Heart left ventricle (tissue), 16 donors: ENCODE measurements at regions of chr9 and their contacts with region 1.

Region 1: DNA sequence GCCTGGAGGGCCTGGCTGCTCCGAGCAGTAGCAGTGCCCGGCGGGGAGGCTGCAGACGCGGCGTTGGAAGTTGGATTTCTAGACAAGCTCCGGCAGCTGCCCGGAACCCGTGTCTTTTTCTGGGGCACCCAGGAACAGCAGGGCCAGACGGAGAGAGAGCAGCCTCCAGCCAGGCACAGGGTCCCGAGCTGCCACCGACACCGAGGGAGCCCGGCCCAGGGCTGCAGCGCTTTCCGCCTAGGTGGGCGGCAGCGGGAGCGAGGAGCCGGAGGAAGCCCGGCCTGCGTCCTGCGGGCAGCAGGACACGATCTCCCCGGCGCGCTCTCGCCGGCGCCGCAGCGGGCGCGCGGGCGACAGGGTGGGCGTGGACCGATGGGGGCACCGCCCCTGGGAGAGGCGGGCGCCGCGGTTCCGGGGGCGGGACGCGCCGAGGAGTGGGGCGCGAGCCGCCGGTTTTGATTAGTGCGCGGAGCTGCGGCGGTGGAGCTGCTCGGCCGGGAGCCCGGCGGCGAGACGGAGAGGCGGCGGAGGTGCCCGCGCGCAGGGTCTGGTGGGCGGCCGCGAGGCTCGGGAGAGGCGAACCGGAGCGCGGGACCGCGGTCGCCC is at the start of gene UGCG:
- DNase-seq: peak; percentile 91 to 95 (median 93)
- ATAC-seq: peak; percentile 93 to 99 (median 98)
- H3K4me3 ChIP-seq: peak within 1 kb of the TSS; percentile 82 to 99 (median 92)
- H3K27ac ChIP-seq: peak within 1 kb of the TSS; percentile 80 to 97 (median 94)
- H3K4me1 ChIP-seq: peaks cover 10 to 51% (median 30%) of the 10 kb centered on the region in 12 donors
- H3K27me3 ChIP-seq: no peaks in the 10 kb centered on the region
- CTCF ChIP-seq: no peak
- POLR2A ChIP-seq: peak; percentile 78 to 97
- total RNA-seq, gene UGCG: 10.5 to 52.0 (median 17.5) TPM

Region 2: DNA sequence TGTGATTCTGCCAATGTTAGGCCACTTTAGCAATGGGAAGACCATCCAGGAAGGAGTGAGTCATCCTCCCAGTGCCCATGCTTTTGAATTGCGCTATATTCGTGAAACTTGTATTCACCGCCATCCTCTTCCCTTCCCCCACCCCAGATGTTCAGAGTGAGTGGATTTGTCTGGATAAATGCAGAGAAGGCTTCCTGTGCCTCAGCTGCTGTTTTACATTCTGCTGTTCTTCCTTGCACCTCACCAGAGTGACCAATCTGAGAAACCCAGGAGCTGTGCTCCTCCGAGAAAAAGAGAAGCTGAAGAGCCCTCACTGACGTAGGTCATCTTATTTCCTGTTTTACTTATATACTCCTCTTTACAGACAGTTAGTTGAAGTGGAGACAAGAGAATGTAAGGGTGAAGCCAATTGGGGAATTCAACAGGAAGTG is 1292.3 kb before region 1 on chr9:
- intact Hi-C with region 1: no loop called
- DNase-seq: no peak
- ATAC-seq: peak in 3 of 4 donors; percentile 14 to 38 (median 18)
- H3K4me3 ChIP-seq: no peak overlapping the region
- H3K27ac ChIP-seq: peak overlapping the region in 1 of 12 donors; percentile 64
- H3K4me1 ChIP-seq: no peaks in the 10 kb centered on the region
- H3K27me3 ChIP-seq: peaks cover 0 to 3% (median 0%) of the 10 kb centered on the region in 9 donors
- CTCF ChIP-seq: no peak
- POLR2A ChIP-seq: no peak

Region 3: GRCh38 chr9:111759762-111760639 is 136.5 kb before region 1 on chr9:
- intact Hi-C with region 1: loop called in 4 of 10 experiments (anchors 2 to 10 kb)
- DNase-seq: peak in 2 of 5 donors; percentile 48 to 50
- ATAC-seq: peak in 3 of 4 donors; percentile 88 to 91 (median 90)
- H3K4me3 ChIP-seq: no peak overlapping the region
- H3K27ac ChIP-seq: peak overlapping the region in 1 of 12 donors; percentile 39
- H3K4me1 ChIP-seq: peaks cover 0 to 8% (median 0%) of the 10 kb centered on the region in 12 donors
- H3K27me3 ChIP-seq: no peaks in the 10 kb centered on the region
- CTCF ChIP-seq: peak; percentile 53 to 81 (median 72)
- POLR2A ChIP-seq: no peak

Region 4: DNA sequence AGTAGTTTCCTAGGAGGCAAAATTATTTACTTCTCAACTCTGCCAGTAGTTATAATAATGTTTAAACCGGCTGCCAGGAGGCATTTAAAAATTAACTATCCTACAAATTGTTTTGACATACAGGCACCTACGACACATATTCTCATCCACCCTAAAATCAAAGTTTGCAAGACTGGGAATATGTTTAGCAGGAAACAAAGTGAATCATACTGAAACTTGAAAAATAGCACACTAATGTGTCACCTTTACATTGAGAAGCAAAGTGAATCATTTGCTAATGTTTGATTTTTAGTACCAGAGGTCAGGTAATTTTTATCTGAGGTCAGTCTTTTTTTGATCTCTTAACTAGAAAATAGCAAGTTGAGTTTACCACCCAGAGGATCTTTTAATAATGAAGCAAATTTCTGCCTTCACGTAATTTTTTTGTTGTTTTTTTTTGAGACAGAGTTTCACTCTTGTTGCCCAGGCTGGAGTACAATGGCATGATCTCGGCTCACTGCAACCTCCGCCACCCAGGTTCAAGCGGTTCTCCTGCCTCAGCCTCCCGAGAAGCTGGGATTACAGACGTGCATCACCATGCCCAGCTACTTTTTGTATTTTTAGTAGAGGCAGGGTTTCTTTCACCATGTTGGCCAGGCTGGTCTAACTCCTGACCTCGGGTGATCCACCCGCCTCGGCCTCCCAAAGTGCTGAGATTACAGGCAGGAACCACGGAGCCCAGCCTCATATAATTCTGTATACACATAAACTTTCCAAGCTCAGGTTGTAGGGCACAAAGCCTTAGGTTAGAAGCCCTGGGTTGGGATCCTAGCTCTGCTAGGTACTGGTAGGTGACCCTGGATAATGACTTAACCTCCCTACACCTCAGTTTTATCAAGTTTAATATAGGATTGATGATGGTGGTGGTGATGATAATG is 124.5 kb after region 1 on chr9:
- intact Hi-C with region 1: loop called in 1 of 10 experiments (anchors 10 kb)
- DNase-seq: no peak
- ATAC-seq: no peak
- H3K4me3 ChIP-seq: no peak overlapping the region
- H3K27ac ChIP-seq: no peak overlapping the region
- H3K4me1 ChIP-seq: peaks cover 0 to 14% (median 2%) of the 10 kb centered on the region in 12 donors
- H3K27me3 ChIP-seq: no peaks in the 10 kb centered on the region
- CTCF ChIP-seq: no peak
- POLR2A ChIP-seq: no peak

Region 5: DNA sequence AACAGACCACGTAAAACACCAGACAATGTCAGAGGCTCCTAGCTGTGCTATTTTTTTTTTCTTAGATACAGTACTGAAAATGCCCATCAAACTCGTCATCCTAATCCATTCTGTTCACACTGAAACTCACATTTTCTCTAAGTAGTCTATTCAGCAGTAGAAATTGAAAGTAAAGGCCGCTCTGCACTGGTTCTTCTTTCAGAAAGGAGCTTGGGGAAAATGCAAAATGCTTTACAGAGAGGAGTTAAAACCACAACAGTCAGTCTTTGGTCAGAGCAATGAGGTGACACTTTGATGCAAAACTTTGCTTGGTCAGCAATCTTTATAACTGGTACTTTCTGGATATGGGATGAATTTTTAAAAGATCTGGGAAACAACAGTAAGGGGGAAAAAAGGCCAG is 322.5 kb after region 1 on chr9:
- intact Hi-C with region 1: no loop called
- DNase-seq: no peak
- ATAC-seq: no peak
- H3K4me3 ChIP-seq: no peak overlapping the region
- H3K27ac ChIP-seq: no peak overlapping the region
- H3K4me1 ChIP-seq: peaks cover 0 to 7% (median 0%) of the 10 kb centered on the region in 12 donors
- H3K27me3 ChIP-seq: no peaks in the 10 kb centered on the region
- CTCF ChIP-seq: no peak
- POLR2A ChIP-seq: no peak

Region 6: DNA sequence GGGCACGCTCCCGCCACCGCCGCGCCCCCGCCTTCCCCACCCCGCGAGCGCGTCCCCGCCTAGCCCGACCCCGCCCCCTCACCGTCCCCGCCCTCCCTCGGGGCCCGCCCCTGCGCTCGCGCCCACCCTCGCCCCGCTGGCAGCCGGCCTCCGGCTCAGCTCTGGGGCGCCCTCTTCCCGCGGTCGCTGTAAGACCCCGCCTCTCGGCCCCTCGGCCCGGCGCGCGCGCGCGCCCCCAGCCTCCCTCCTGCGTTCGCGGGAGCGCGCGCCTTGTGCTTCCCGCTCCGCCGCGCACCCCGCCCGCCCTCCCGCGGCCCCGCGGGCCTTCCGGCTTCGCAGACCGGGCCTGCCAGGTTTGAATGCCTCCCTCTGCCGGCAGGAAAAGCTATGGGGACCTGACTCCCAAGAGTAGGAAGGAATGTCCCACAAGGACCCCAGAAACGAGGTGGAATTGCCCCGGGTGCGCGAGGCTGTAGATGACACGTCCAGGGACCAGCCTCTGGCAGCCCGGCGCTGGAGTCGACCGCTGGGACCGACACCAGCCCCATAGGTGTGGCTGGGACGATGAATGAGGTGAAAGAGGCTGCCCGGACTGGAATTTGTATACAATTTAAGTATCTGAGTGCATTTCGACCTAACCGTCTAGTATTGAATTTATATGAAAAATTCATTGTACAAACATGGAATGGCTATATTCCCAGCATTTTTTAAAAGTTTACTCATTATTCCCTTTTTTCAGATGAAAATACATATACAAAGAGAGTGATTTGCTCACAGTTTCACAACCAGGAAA is 437.4 kb after region 1 on chr9:
- intact Hi-C with region 1: loop called in 6 of 10 experiments (anchors 2 to 10 kb)
- DNase-seq: peak; percentile 94 to 98 (median 96)
- ATAC-seq: peak; percentile 93 to 97 (median 96)
- H3K4me3 ChIP-seq: peak overlapping the region; percentile 71 to 100 (median 86)
- H3K27ac ChIP-seq: peak overlapping the region; percentile 92 to 100 (median 98)
- H3K4me1 ChIP-seq: peaks cover 0 to 39% (median 14%) of the 10 kb centered on the region in 12 donors
- H3K27me3 ChIP-seq: no peaks in the 10 kb centered on the region
- CTCF ChIP-seq: peak; percentile 28 to 73 (median 60)
- POLR2A ChIP-seq: no peak

Region 7: GRCh38 chr9:112379177-112380101 is 483.0 kb after region 1 on chr9:
- intact Hi-C with region 1: loop called in 1 of 10 experiments (anchors 10 kb)
- DNase-seq: peak; percentile 99 to 100 (median 100)
- ATAC-seq: peak; percentile 96 to 98 (median 98)
- H3K4me3 ChIP-seq: peak overlapping the region; percentile 61 to 99 (median 82)
- H3K27ac ChIP-seq: peak overlapping the region; percentile 90 to 99 (median 98)
- H3K4me1 ChIP-seq: peaks cover 0 to 60% (median 40%) of the 10 kb centered on the region in 12 donors
- H3K27me3 ChIP-seq: no peaks in the 10 kb centered on the region
- CTCF ChIP-seq: peak in 1 of 12 donors; percentile 16
- POLR2A ChIP-seq: peak in 1 of 2 donors; percentile 94